Activated CD8-positive, alpha-beta T cell treated with anti-CD3 and anti-CD28 coated beads, Interleukin-2, amount 10 ng/mL, durations not matched to agents 7 days and 5 days (primary cell): ENCODE measurements at regions of chrX and their contacts with region 1.

Region 1: GRCh38 chrX:71103110-71103983 is 3.2 kb downstream of the CXorf65 start:
- DNase-seq: peak; percentile 72
- ATAC-seq: peak; percentile 44
- H3K4me3 Mint-ChIP-seq: peak overlapping the region; percentile 84
- H3K27ac Mint-ChIP-seq: peak overlapping the region; percentile 95
- H3K4me1 Mint-ChIP-seq: peaks cover 80% of the 10 kb centered on the region
- H3K27me3 Mint-ChIP-seq: no peaks in the 10 kb centered on the region

Region 2: GRCh38 chrX:71017389-71017944 is 85.9 kb before region 1 on chrX:
- CTCF ChIA-PET with region 1: no interaction called
- POLR2A ChIA-PET with region 1: no interaction called
- DNase-seq: no peak
- ATAC-seq: no peak
- H3K4me3 Mint-ChIP-seq: no peak overlapping the region
- H3K27ac Mint-ChIP-seq: no peak overlapping the region
- H3K4me1 Mint-ChIP-seq: no peaks in the 10 kb centered on the region
- H3K27me3 Mint-ChIP-seq: no peaks in the 10 kb centered on the region

Region 3: GRCh38 chrX:71128915-71129765 is 25.8 kb after region 1 on chrX:
- CTCF ChIA-PET with region 1: interaction called, 90 read pairs
- POLR2A ChIA-PET with region 1: interaction called, 5 read pairs
- DNase-seq: peak; percentile 80
- ATAC-seq: peak; percentile 91
- H3K4me3 Mint-ChIP-seq: no peak overlapping the region
- H3K27ac Mint-ChIP-seq: peak overlapping the region; percentile 80
- H3K4me1 Mint-ChIP-seq: peaks cover 22% of the 10 kb centered on the region
- H3K27me3 Mint-ChIP-seq: no peaks in the 10 kb centered on the region